CD4-positive, alpha-beta T cell (primary cell): ENCODE measurements at regions of chr16 and their contacts with region 1.

Region 1: DNA sequence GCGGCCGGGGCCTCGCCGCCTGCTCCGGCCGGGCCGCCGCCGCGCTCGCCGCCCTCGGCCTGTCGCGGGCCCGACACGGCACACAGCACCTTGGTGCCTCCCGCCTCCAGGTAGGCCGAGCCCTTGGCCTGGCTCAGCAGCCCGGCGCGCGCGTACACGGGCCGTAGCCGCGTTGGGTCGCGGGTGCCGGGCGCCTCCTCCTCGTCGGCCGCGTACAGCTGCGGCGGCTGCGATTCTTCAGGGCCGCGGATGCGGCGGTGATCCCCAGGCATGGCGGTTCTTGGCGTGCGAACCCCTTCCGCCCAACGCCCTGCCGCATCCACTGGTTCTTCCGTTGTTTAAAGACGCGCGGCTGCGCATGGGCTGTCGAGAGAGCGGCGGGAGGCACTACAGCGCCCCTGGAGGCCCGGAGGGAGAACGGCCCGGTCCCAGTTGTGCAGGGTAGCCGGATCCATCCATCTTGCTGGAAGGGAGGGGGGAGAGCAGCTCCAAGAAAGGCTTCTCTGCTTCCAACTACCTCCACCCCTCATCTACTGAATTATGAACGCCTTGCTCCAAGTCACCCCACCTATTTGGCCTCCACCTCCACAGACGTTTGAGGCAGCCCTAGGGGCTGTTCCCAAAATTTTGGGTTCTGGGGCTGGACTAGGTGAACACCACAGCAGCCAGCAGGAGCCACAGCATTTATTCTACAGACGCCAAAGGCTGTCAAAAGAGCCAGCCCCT is at the start of gene EXOSC6:
- DNase-seq: peak; percentile 86 to 97 (median 90)
- ATAC-seq: peak; percentile 95
- H3K4me3 ChIP-seq: peak within 1 kb of the TSS; percentile 54
- H3K4me3 Mint-ChIP-seq: peak within 1 kb of the TSS; percentile 98
- H3K27ac ChIP-seq: peak within 1 kb of the TSS in 1 of 2 donors; percentile 75
- H3K27ac Mint-ChIP-seq: peak within 1 kb of the TSS; percentile 97
- H3K4me1 ChIP-seq: peaks cover 27% of the 10 kb centered on the region
- H3K4me1 Mint-ChIP-seq: peaks cover 21% of the 10 kb centered on the region
- H3K27me3 ChIP-seq: no peaks in the 10 kb centered on the region
- H3K27me3 Mint-ChIP-seq: no peaks in the 10 kb centered on the region
- CTCF ChIP-seq: peak; percentile 93
- total RNA-seq, gene EXOSC6: 27.8 to 28.2 TPM

Region 2: GRCh38 chr16:68644715-68645493 is 1606.9 kb before region 1 on chr16 and contains the start of gene CDH3:
- CTCF ChIA-PET with region 1: no interaction called
- POLR2A ChIA-PET with region 1: no interaction called
- intact Hi-C with region 1: no loop called
- DNase-seq: peak in 9 of 14 experiments; percentile 7 to 46 (median 22)
- ATAC-seq: peak; percentile 60
- H3K4me3 ChIP-seq: peak within 1 kb of the TSS; percentile 38
- H3K4me3 Mint-ChIP-seq: peak within 1 kb of the TSS; percentile 56
- H3K27ac ChIP-seq: no peak within 1 kb of the TSS
- H3K27ac Mint-ChIP-seq: no peak within 1 kb of the TSS
- H3K4me1 ChIP-seq: peaks cover 27% of the 10 kb centered on the region
- H3K4me1 Mint-ChIP-seq: peaks cover 20% of the 10 kb centered on the region
- H3K27me3 ChIP-seq: peaks cover 67 to 80% of the 10 kb centered on the region in 2 experiments
- H3K27me3 Mint-ChIP-seq: peaks cover 79% of the 10 kb centered on the region
- CTCF ChIP-seq: no peak
- total RNA-seq, gene CDH3: 0.22 to 0.74 TPM

Region 3: GRCh38 chr16:69339289-69340108 is 912.3 kb before region 1 on chr16 and contains the starts of genes COG8 and NIP7:
- CTCF ChIA-PET with region 1: no interaction called
- POLR2A ChIA-PET with region 1: no interaction called
- intact Hi-C with region 1: loop called in 1 of 2 experiments (anchors 10 kb)
- DNase-seq: peak; percentile 84 to 96 (median 89)
- ATAC-seq: peak; percentile 89
- H3K4me3 ChIP-seq: peak within 1 kb of the TSS; percentile 63
- H3K4me3 Mint-ChIP-seq: peak within 1 kb of the TSS; percentile 96
- H3K27ac ChIP-seq: peak within 1 kb of the TSS; percentile 79 to 80
- H3K27ac Mint-ChIP-seq: peak within 1 kb of the TSS; percentile 90
- H3K4me1 ChIP-seq: peaks cover 31% of the 10 kb centered on the region
- H3K4me1 Mint-ChIP-seq: peaks cover 61% of the 10 kb centered on the region
- H3K27me3 ChIP-seq: no peaks in the 10 kb centered on the region
- H3K27me3 Mint-ChIP-seq: no peaks in the 10 kb centered on the region
- CTCF ChIP-seq: peak; percentile 82
- total RNA-seq, gene COG8: 18.4 to 19.3 TPM
- total RNA-seq, gene NIP7: 36.7 to 38.2 TPM

Region 4: GRCh38 chr16:70267516-70267915 is 15.7 kb after region 1 on chr16:
- CTCF ChIA-PET with region 1: interaction called, 12 read pairs
- POLR2A ChIA-PET with region 1: interaction called, 7 read pairs
- intact Hi-C with region 1: no loop called
- DNase-seq: peak in 5 of 14 experiments; percentile 11 to 63 (median 54)
- ATAC-seq: peak; percentile 34
- H3K4me3 ChIP-seq: no peak overlapping the region
- H3K4me3 Mint-ChIP-seq: no peak overlapping the region
- H3K27ac ChIP-seq: no peak overlapping the region
- H3K27ac Mint-ChIP-seq: no peak overlapping the region
- H3K4me1 ChIP-seq: no peaks in the 10 kb centered on the region
- H3K4me1 Mint-ChIP-seq: no peaks in the 10 kb centered on the region
- H3K27me3 ChIP-seq: no peaks in the 10 kb centered on the region
- H3K27me3 Mint-ChIP-seq: no peaks in the 10 kb centered on the region
- CTCF ChIP-seq: peak; percentile 66

Region 5: GRCh38 chr16:70289229-70290098 is 37.7 kb after region 1 on chr16 and contains the start of gene AARS1:
- CTCF ChIA-PET with region 1: interaction called, 7 read pairs
- POLR2A ChIA-PET with region 1: interaction called, 22 read pairs
- intact Hi-C with region 1: loop called (anchors 2 to 5 kb)
- DNase-seq: peak; percentile 86 to 99 (median 90)
- ATAC-seq: peak; percentile 94
- H3K4me3 ChIP-seq: peak within 1 kb of the TSS; percentile 95
- H3K4me3 Mint-ChIP-seq: peak within 1 kb of the TSS; percentile 96
- H3K27ac ChIP-seq: peak within 1 kb of the TSS; percentile 74 to 86
- H3K27ac Mint-ChIP-seq: peak within 1 kb of the TSS; percentile 91
- H3K4me1 ChIP-seq: peaks cover 22% of the 10 kb centered on the region
- H3K4me1 Mint-ChIP-seq: peaks cover 21% of the 10 kb centered on the region
- H3K27me3 ChIP-seq: no peaks in the 10 kb centered on the region
- H3K27me3 Mint-ChIP-seq: no peaks in the 10 kb centered on the region
- CTCF ChIP-seq: no peak
- total RNA-seq, gene AARS1: 10.3 to 11.1 TPM

Region 6: GRCh38 chr16:70298988-70299938 is 47.5 kb after region 1 on chr16 and contains the start of gene DDX19B:
- CTCF ChIA-PET with region 1: interaction called, 5 read pairs
- POLR2A ChIA-PET with region 1: interaction called, 17 read pairs
- intact Hi-C with region 1: no loop called
- DNase-seq: peak; percentile 33 to 78 (median 48)
- ATAC-seq: peak; percentile 88
- H3K4me3 ChIP-seq: peak within 1 kb of the TSS; percentile 88
- H3K4me3 Mint-ChIP-seq: peak within 1 kb of the TSS; percentile 96
- H3K27ac ChIP-seq: peak within 1 kb of the TSS; percentile 88 to 97
- H3K27ac Mint-ChIP-seq: peak within 1 kb of the TSS; percentile 98
- H3K4me1 ChIP-seq: peaks cover 25% of the 10 kb centered on the region
- H3K4me1 Mint-ChIP-seq: peaks cover 45% of the 10 kb centered on the region
- H3K27me3 ChIP-seq: no peaks in the 10 kb centered on the region
- H3K27me3 Mint-ChIP-seq: no peaks in the 10 kb centered on the region
- CTCF ChIP-seq: no peak
- total RNA-seq, gene DDX19B: 23.0 TPM

Region 7: DNA sequence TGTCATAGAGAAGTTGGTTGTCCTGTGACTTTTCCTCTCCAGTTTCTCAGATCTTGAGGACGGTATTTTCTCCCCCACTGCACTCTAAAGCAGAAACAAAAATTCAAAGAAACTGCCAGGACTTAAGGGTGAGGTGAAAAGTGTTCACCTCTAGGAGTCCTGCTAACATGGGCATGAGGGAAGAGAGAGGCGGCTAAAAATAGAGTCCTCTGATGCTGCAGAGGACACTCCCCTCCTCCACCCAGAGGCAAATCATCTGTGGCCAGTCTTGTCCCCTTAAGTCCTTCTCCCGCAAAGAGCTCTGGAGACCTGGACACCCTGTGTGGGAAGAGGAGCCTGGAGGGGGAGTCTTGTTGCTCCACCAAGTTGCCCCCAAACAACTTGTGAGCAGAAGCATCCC is 90.2 kb after region 1 on chr16:
- CTCF ChIA-PET with region 1: interaction called, 11 read pairs
- POLR2A ChIA-PET with region 1: interaction called, 21 read pairs
- intact Hi-C with region 1: loop called in 1 of 2 experiments (anchors 2 kb)
- DNase-seq: no peak
- ATAC-seq: no peak
- H3K4me3 ChIP-seq: no peak overlapping the region
- H3K4me3 Mint-ChIP-seq: no peak overlapping the region
- H3K27ac ChIP-seq: no peak overlapping the region
- H3K27ac Mint-ChIP-seq: no peak overlapping the region
- H3K4me1 ChIP-seq: peaks cover 13% of the 10 kb centered on the region
- H3K4me1 Mint-ChIP-seq: peaks cover 13% of the 10 kb centered on the region
- H3K27me3 ChIP-seq: no peaks in the 10 kb centered on the region
- H3K27me3 Mint-ChIP-seq: no peaks in the 10 kb centered on the region
- CTCF ChIP-seq: no peak